HCT116 (cell line): ENCODE measurements at regions of chr18 and their contacts with region 1.

Region 1: DNA sequence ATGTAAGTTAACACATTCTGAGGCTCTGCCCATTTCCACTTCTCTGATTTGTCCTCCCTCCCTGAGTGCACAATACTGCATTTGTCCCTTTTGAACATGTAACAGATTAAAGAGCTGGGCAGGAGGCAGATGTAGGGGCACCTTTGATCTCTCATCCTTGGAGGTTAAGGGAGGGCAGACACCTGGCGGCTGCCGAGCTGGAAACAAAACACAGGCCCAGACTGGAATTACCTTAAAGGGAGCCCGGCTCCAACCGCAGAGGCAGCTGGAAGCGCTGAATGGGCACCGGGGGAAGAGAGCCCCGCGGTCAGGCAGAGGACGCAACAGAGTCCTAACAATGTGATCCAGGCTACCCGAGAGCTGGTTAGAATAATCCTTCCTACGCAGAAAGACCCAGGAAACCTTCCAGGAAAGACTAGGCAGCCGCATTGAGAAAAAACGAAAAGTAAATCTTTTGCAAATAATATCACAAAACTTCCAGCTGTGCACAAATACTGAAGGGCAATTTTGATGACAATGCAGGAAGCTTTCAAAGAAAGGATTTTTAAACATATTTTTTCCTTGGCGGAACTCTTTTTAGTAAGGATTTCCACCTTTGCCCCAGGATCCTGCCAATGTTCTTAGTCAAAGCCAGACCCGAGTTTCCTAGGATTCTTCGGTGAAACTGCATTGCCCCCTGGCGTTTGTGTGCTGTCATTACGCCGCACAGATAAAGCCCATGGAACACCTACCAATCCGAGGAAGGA is 216.0 kb downstream of the TGIF1 start:
- DNase-seq: peak; percentile 95
- ATAC-seq: peak; percentile 80
- H3K4me3 ChIP-seq: peak overlapping the region in 1 of 2 experiments; percentile 28; a peak in 2 of 4 replicates
- H3K27ac ChIP-seq: peak overlapping the region; percentile 85
- H3K4me1 ChIP-seq: peaks cover 63 to 70% of the 10 kb centered on the region in 2 experiments
- H3K27me3 ChIP-seq: no peaks in the 10 kb centered on the region
- CTCF ChIP-seq: peak in 2 of 3 experiments; percentile 89 to 95; a peak in 4 of 6 replicates
- POLR2A ChIP-seq: no peak
- RAD21 ChIP-seq: no peak

Region 2: GRCh38 chr18:3297025-3297984 is 368.6 kb before region 1 on chr18:
- CTCF ChIA-PET with region 1: interaction called, 20 read pairs
- POLR2A ChIA-PET with region 1: interaction called, 17 read pairs
- RAD21 ChIA-PET with region 1: no interaction called
- intact Hi-C with region 1: loop called (anchors 5 kb)
- DNase-seq: peak; percentile 94
- ATAC-seq: peak; percentile 91
- H3K4me3 ChIP-seq: peak overlapping the region; percentile 76 to 90
- H3K27ac ChIP-seq: peak overlapping the region; percentile 82
- H3K4me1 ChIP-seq: peaks cover 0 to 21% of the 10 kb centered on the region in 2 experiments; a peak in 2 of 4 replicates
- H3K27me3 ChIP-seq: no peaks in the 10 kb centered on the region
- CTCF ChIP-seq: peak; percentile 56 to 87 (median 61); a peak in 5 of 6 replicates
- POLR2A ChIP-seq: peak; percentile 95
- RAD21 ChIP-seq: no peak; the same call in 1 of the 2 replicates

Region 3: GRCh38 chr18:3447895-3448837 is 217.8 kb before region 1 on chr18:
- CTCF ChIA-PET with region 1: interaction called, 6 read pairs
- POLR2A ChIA-PET with region 1: interaction called, 9 read pairs
- RAD21 ChIA-PET with region 1: interaction called, 5 to 6 read pairs
- intact Hi-C with region 1: loop called (anchors 1 kb)
- DNase-seq: peak; percentile 92
- ATAC-seq: peak; percentile 81
- H3K4me3 ChIP-seq: peak overlapping the region; percentile 78 to 85
- H3K27ac ChIP-seq: peak overlapping the region; percentile 90
- H3K4me1 ChIP-seq: peaks cover 25 to 45% of the 10 kb centered on the region in 2 experiments
- H3K27me3 ChIP-seq: no peaks in the 10 kb centered on the region
- CTCF ChIP-seq: no peak
- POLR2A ChIP-seq: no peak
- RAD21 ChIP-seq: no peak

Region 4: GRCh38 chr18:3593904-3594661 is 71.9 kb before region 1 on chr18:
- CTCF ChIA-PET with region 1: interaction called, 45 read pairs
- POLR2A ChIA-PET with region 1: interaction called, 68 read pairs
- RAD21 ChIA-PET with region 1: interaction called, 4 to 16 read pairs
- intact Hi-C with region 1: loop called (anchors 1 kb)
- DNase-seq: peak; percentile 95
- ATAC-seq: peak; percentile 70
- H3K4me3 ChIP-seq: peak overlapping the region; percentile 60 to 81
- H3K27ac ChIP-seq: peak overlapping the region; percentile 100
- H3K4me1 ChIP-seq: peaks cover 86 to 95% of the 10 kb centered on the region in 2 experiments
- H3K27me3 ChIP-seq: no peaks in the 10 kb centered on the region
- CTCF ChIP-seq: peak in 2 of 3 experiments; percentile 73 to 86; a peak in 4 of 6 replicates
- POLR2A ChIP-seq: no peak
- RAD21 ChIP-seq: no peak

Region 5: DNA sequence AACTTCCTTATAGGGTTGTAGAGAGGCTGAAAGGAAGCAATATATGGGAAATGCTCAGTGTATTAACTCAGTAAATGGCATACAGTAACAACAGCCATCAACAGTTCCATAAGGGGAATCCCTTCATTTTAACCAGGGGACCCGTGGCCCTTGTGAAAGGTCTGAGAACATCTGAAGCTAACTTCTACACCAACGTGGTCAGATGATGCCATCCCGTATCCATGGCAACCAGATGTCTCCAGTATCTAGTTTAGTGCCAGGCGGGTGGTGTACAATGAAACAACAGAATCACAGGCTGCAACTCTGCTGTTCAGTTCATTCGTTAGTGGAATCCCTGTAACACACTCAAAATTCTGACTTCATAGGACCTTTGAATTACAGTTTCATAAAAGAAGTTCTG is 53.6 kb before region 1 on chr18:
- CTCF ChIA-PET with region 1: interaction called, 6 read pairs
- POLR2A ChIA-PET with region 1: interaction called, 66 read pairs
- RAD21 ChIA-PET with region 1: interaction called, 3 to 8 read pairs
- intact Hi-C with region 1: no loop called
- DNase-seq: no peak
- ATAC-seq: no peak
- H3K4me3 ChIP-seq: no peak overlapping the region
- H3K27ac ChIP-seq: peak overlapping the region; percentile 100
- H3K4me1 ChIP-seq: peaks cover 84 to 99% of the 10 kb centered on the region in 2 experiments
- H3K27me3 ChIP-seq: no peaks in the 10 kb centered on the region
- CTCF ChIP-seq: no peak
- POLR2A ChIP-seq: no peak
- RAD21 ChIP-seq: no peak

Region 6: DNA sequence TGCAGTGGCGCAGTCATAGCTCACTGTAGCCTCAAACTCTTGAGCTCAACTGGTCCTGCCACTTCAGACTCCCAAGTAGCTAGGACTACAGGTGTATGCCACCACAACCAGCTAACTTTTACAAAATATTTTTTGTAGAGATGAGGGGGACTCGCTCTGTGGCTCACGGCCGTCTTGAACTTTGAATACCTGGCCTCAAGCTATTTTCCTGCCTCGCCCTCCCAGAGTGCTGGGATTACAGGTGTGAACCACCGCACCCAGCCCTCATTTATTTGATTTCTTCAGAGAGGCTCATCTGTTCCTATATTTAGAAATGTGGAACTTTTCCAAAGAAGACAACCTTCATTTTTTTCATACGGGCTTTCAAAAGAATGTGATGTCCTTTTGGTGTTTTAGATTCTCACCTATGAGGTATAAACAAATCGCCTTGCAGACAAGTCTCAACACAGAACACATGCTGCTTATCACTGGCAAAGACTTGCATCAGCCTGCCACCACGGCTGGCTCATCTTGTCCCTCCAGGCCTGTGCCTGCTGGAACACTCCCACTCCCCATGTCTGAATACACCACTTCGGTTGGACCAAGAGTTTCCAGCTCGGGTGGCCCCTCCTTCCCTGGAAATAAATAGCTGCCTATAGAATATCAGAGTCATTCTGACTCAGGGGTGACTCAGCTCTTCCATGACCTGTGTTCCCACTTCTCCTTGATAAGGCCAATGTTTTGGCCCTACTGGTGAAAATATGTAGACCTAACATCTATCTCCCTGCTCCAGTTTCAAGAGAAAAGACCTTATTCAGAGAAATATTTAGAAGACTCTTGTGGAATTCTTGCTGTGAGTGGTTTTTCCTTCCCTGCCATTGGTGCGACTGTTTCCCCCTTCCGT is 13.3 kb before region 1 on chr18:
- CTCF ChIA-PET with region 1: interaction called, 13 read pairs
- POLR2A ChIA-PET with region 1: interaction called, 100 read pairs
- RAD21 ChIA-PET with region 1: interaction called, 4 to 5 read pairs
- intact Hi-C with region 1: no loop called
- DNase-seq: peak; percentile 98
- ATAC-seq: peak; percentile 72
- H3K4me3 ChIP-seq: peak overlapping the region; percentile 39 to 52
- H3K27ac ChIP-seq: peak overlapping the region; percentile 96
- H3K4me1 ChIP-seq: peaks cover 92 to 93% of the 10 kb centered on the region in 2 experiments
- H3K27me3 ChIP-seq: no peaks in the 10 kb centered on the region
- CTCF ChIP-seq: peak in 2 of 3 experiments; percentile 7 to 13; a peak in 1 of 6 replicates
- POLR2A ChIP-seq: no peak
- RAD21 ChIP-seq: no peak

Region 7: DNA sequence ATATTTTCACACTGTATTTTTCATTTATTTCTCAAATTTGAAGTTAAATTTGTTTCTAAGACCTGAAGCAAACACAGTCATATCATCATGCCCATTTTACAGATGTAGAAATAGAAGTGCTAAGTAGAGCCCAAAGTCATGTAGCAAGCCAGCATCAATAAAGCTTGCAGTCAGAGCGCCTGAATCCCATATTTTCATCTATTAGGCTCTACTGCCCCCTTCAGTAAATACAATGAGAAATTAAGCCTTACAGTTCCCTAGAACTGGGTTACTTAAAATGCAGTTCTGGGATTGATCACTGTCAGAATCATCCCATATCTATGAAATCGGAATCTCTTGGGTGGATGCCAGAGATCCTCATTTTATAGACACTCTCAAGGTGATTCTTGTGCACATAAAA is 203.9 kb after region 1 on chr18:
- CTCF ChIA-PET with region 1: interaction called, 24 read pairs
- POLR2A ChIA-PET with region 1: no interaction called
- RAD21 ChIA-PET with region 1: interaction called, 6 to 9 read pairs
- intact Hi-C with region 1: no loop called
- DNase-seq: peak; percentile 40
- ATAC-seq: peak; percentile 87
- H3K4me3 ChIP-seq: no peak overlapping the region
- H3K27ac ChIP-seq: no peak overlapping the region
- H3K4me1 ChIP-seq: no peaks in the 10 kb centered on the region
- H3K27me3 ChIP-seq: peaks cover 42% of the 10 kb centered on the region
- CTCF ChIP-seq: peak; percentile 31 to 59 (median 51); a peak in 4 of 6 replicates
- POLR2A ChIP-seq: no peak
- RAD21 ChIP-seq: peak; percentile 74